ENCODE measurements at regions of chr2 and their contacts with region 1.

Region 1: GRCh38 chr2:64488050-64488974 is 34.4 kb downstream of the LGALSL start:
- DNase-seq: peak; percentile 55
- H3K4me3 ChIP-seq: no peak overlapping the region
- H3K27ac ChIP-seq: no peak overlapping the region
- H3K4me1 ChIP-seq: peaks cover 31% of the 10 kb centered on the region
- H3K27me3 ChIP-seq: peaks cover 10 to 19% of the 10 kb centered on the region in 2 experiments
- CTCF ChIP-seq: peak; percentile 87 to 92
- POLR2A ChIP-seq: no peak

Region 2: GRCh38 chr2:64144057-64145013 is 344.0 kb before region 1 on chr2 and contains the start of gene PELI1:
- CTCF ChIA-PET with region 1: no interaction called
- POLR2A ChIA-PET with region 1: no interaction called
- dilution Hi-C with region 1: no loop called
- intact Hi-C with region 1: loop called (anchors 1 kb)
- DNase-seq: peak; percentile 99
- H3K4me3 ChIP-seq: peak within 1 kb of the TSS; percentile 70 to 90 (median 83)
- H3K27ac ChIP-seq: peak within 1 kb of the TSS; percentile 74
- H3K4me1 ChIP-seq: peaks cover 18% of the 10 kb centered on the region
- H3K27me3 ChIP-seq: peaks cover 0 to 4% of the 10 kb centered on the region in 2 experiments
- CTCF ChIP-seq: peak in 1 of 2 donors; percentile 34
- POLR2A ChIP-seq: peak; percentile 95
- total RNA-seq, gene PELI1: 30.9 and 39.9 TPM in 2 replicates

Region 3: GRCh38 chr2:64404002-64404731 is 84.1 kb before region 1 on chr2:
- CTCF ChIA-PET with region 1: interaction called, 6 read pairs
- POLR2A ChIA-PET with region 1: no interaction called
- dilution Hi-C with region 1: no loop called
- intact Hi-C with region 1: loop called (anchors 1 kb)
- DNase-seq: peak; percentile 99
- H3K4me3 ChIP-seq: peak overlapping the region in 1 of 3 experiments; percentile 26
- H3K27ac ChIP-seq: peak overlapping the region; percentile 72
- H3K4me1 ChIP-seq: peaks cover 35% of the 10 kb centered on the region
- H3K27me3 ChIP-seq: peaks cover 7 to 17% of the 10 kb centered on the region in 2 experiments
- CTCF ChIP-seq: no peak
- POLR2A ChIP-seq: no peak

Region 4: GRCh38 chr2:64453770-64454385 is 34.4 kb before region 1 on chr2 and contains the start of gene LGALSL:
- CTCF ChIA-PET with region 1: interaction called, 16 read pairs
- POLR2A ChIA-PET with region 1: no interaction called
- dilution Hi-C with region 1: no loop called
- intact Hi-C with region 1: loop called (anchors 1 kb)
- DNase-seq: peak; percentile 66
- H3K4me3 ChIP-seq: peak within 1 kb of the TSS; percentile 60 to 93 (median 65)
- H3K27ac ChIP-seq: peak within 1 kb of the TSS; percentile 65
- H3K4me1 ChIP-seq: peaks cover 8% of the 10 kb centered on the region
- H3K27me3 ChIP-seq: peaks cover under 1 to 4% of the 10 kb centered on the region in 2 experiments
- CTCF ChIP-seq: no peak
- POLR2A ChIP-seq: no peak
- total RNA-seq, gene LGALSL: 2.3 and 5.8 TPM in 2 replicates

Region 5: DNA sequence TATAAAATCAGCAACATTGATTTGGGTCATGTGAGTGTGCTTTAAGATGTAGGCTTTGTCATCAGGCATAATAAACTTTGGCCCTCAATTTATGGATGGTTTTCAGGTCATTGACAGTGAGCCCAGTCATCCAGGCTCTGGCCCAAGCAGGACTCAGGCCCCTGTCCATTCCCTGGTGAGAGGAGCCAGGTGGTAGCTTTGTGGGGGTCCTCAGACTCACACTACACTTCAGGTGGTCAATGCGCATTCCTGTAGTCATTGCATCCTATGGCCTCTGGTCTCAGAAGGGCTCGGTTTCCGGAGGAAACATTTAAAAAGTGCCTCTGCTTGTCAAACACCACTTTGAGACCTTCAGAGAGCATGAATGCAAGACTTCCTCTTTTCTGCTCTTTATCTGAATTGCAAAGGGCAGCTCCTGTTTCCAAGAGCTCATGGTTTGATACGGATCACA is 14.2 kb before region 1 on chr2:
- CTCF ChIA-PET with region 1: interaction called, 34 read pairs
- POLR2A ChIA-PET with region 1: no interaction called
- dilution Hi-C with region 1: no loop called
- intact Hi-C with region 1: no loop called
- DNase-seq: no peak
- H3K4me3 ChIP-seq: no peak overlapping the region
- H3K27ac ChIP-seq: no peak overlapping the region
- H3K4me1 ChIP-seq: no peaks in the 10 kb centered on the region
- H3K27me3 ChIP-seq: peaks cover 0 to 5% of the 10 kb centered on the region in 2 experiments
- CTCF ChIP-seq: no peak
- POLR2A ChIP-seq: no peak

Region 6: DNA sequence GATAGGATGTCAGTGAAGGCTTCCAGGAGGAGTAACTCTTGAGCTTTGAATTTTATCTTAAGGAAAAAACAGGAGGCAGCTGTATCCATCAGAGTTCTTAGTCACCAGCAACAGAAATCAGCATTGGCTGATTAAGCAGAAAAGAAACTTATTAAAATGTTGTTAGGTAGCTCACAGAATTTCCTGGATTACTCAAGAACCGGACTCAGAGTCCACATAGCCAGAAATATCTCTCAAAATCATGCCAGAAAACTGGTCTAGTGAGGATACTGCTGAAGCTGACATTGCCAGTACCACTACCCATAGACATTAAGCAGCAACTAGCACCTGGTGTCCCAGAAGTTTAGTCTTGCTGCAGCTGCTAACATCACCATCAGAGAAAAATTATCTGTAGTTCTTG is 25.7 kb after region 1 on chr2:
- CTCF ChIA-PET with region 1: interaction called, 10 read pairs
- POLR2A ChIA-PET with region 1: no interaction called
- dilution Hi-C with region 1: no loop called
- intact Hi-C with region 1: no loop called
- DNase-seq: no peak
- H3K4me3 ChIP-seq: no peak overlapping the region
- H3K27ac ChIP-seq: no peak overlapping the region
- H3K4me1 ChIP-seq: no peaks in the 10 kb centered on the region
- H3K27me3 ChIP-seq: peaks cover 32 to 42% of the 10 kb centered on the region in 2 experiments
- CTCF ChIP-seq: no peak
- POLR2A ChIP-seq: no peak

Measured in endothelial cell of umbilical vein (primary cell).